ENCODE measurements at regions of chr4 and their contacts with region 1.

Region 1: DNA sequence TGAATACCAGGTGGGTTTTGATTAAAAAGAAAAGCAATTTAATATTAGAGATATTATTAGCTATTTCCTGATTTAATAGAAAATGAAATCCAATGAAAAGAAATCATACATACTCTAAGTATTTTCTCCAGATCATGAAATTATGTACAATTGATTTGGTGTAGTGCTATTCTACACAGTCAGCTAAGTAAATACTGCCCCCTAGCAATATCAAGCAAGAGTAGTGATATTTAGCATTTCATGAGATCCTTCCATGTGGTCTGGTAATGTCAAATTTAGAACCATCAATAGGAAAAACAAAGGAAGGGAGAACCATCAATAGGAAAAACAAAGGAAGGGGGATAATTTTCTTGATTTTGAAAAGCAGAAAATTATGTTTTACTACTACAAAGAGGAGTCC is 114.6 kb downstream of the TBCK start:
- DNase-seq: peak; percentile 27
- H3K4me3 Mint-ChIP-seq: no peak overlapping the region
- H3K27ac Mint-ChIP-seq: no peak overlapping the region
- H3K4me1 Mint-ChIP-seq: no peaks in the 10 kb centered on the region
- H3K27me3 Mint-ChIP-seq: no peaks in the 10 kb centered on the region
- CTCF ChIP-seq: peak; percentile 52

Region 2: DNA sequence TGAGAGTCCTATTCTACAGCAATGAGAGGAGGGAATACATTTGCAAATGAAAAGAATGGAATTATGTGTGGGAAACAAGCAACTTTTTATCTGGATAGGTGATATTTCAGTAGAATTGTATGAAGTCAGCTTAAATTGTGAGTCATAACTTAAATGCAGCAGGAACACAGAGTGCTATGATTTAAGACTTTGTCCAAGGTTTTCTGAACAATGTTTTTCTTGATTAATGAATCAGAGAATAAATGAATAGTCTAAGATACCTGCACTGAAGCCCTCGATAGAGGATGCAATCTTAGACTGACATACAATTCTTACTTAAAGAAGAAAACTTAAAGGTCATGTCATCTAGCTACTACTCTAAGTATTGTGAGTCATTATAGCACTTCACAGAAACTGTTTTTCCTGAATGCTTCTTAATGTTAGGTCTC is 640.9 kb before region 1 on chr4:
- CTCF ChIA-PET with region 1: no interaction called
- POLR2A ChIA-PET with region 1: no interaction called
- intact Hi-C with region 1: no loop called
- DNase-seq: peak; percentile 12
- H3K4me3 Mint-ChIP-seq: no peak overlapping the region
- H3K27ac Mint-ChIP-seq: peak overlapping the region; percentile 59
- H3K4me1 Mint-ChIP-seq: no peaks in the 10 kb centered on the region
- H3K27me3 Mint-ChIP-seq: no peaks in the 10 kb centered on the region
- CTCF ChIP-seq: no peak

Region 3: DNA sequence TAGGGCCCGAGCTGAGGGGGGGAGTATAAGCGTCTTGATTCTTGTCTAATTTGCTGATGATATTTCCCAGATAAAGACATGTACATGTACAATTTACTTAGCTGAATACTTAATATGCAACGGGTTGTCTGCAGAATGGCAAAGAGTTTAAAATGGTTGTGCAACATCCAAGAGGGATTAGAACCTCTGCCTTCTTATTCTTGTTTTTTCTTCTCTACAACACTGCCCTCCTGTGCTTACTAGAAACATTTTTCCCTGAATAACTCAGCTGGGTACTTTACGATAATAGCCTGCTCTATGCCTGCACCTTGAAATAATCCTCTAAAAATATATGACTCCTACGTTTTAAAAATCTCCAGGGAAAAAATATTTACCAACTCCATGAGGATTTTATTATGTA is 534.7 kb before region 1 on chr4:
- CTCF ChIA-PET with region 1: no interaction called
- POLR2A ChIA-PET with region 1: no interaction called
- intact Hi-C with region 1: loop called (anchors 1 kb)
- DNase-seq: peak; percentile 51
- H3K4me3 Mint-ChIP-seq: no peak overlapping the region
- H3K27ac Mint-ChIP-seq: no peak overlapping the region
- H3K4me1 Mint-ChIP-seq: no peaks in the 10 kb centered on the region
- H3K27me3 Mint-ChIP-seq: no peaks in the 10 kb centered on the region
- CTCF ChIP-seq: peak; percentile 25

Region 4: GRCh38 chr4:105708530-105709391 is 492.6 kb before region 1 on chr4 and contains the starts of genes GSTCD and INTS12:
- CTCF ChIA-PET with region 1: interaction called, 5 read pairs
- POLR2A ChIA-PET with region 1: interaction called, 4 read pairs
- intact Hi-C with region 1: loop called (anchors 2 kb)
- DNase-seq: peak; percentile 93
- H3K4me3 Mint-ChIP-seq: peak within 1 kb of the TSS; percentile 86
- H3K27ac Mint-ChIP-seq: peak within 1 kb of the TSS; percentile 91
- H3K4me1 Mint-ChIP-seq: peaks cover 28% of the 10 kb centered on the region
- H3K27me3 Mint-ChIP-seq: no peaks in the 10 kb centered on the region
- CTCF ChIP-seq: no peak
- total RNA-seq, gene GSTCD: 16.3 and 19.2 TPM in 2 replicates
- total RNA-seq, gene INTS12: 34.5 and 40.0 TPM in 2 replicates

Region 5: DNA sequence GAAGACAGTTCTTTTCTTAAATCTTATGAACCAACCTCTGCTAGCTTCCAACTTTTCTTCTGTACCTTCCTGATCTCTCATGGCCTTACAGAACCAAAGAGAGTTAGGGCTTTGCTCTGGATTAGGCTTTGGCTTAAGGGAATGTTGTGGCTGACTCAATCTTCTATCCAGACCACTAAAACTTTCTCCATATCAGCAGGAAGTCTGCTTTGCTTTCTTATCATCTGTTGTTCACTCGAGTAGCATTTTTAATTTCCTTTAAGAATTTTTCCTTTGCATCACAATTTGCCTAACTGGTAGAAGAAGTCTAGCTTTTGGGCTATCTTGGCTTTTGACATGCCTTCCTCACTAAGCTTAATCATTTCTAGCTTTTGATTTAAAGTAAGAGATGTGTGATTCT is 52.3 kb before region 1 on chr4:
- CTCF ChIA-PET with region 1: no interaction called
- POLR2A ChIA-PET with region 1: no interaction called
- intact Hi-C with region 1: no loop called
- DNase-seq: no peak
- H3K4me3 Mint-ChIP-seq: no peak overlapping the region
- H3K27ac Mint-ChIP-seq: no peak overlapping the region
- H3K4me1 Mint-ChIP-seq: no peaks in the 10 kb centered on the region
- H3K27me3 Mint-ChIP-seq: no peaks in the 10 kb centered on the region
- CTCF ChIP-seq: no peak

Region 6: GRCh38 chr4:106222548-106222947 is 21.2 kb after region 1 on chr4:
- CTCF ChIA-PET with region 1: no interaction called
- POLR2A ChIA-PET with region 1: no interaction called
- intact Hi-C with region 1: no loop called
- DNase-seq: no peak
- H3K4me3 Mint-ChIP-seq: no peak overlapping the region
- H3K27ac Mint-ChIP-seq: no peak overlapping the region
- H3K4me1 Mint-ChIP-seq: no peaks in the 10 kb centered on the region
- H3K27me3 Mint-ChIP-seq: no peaks in the 10 kb centered on the region
- CTCF ChIP-seq: no peak